ENCODE measurements at regions of chr6 and their contacts with region 1.

Region 1: DNA sequence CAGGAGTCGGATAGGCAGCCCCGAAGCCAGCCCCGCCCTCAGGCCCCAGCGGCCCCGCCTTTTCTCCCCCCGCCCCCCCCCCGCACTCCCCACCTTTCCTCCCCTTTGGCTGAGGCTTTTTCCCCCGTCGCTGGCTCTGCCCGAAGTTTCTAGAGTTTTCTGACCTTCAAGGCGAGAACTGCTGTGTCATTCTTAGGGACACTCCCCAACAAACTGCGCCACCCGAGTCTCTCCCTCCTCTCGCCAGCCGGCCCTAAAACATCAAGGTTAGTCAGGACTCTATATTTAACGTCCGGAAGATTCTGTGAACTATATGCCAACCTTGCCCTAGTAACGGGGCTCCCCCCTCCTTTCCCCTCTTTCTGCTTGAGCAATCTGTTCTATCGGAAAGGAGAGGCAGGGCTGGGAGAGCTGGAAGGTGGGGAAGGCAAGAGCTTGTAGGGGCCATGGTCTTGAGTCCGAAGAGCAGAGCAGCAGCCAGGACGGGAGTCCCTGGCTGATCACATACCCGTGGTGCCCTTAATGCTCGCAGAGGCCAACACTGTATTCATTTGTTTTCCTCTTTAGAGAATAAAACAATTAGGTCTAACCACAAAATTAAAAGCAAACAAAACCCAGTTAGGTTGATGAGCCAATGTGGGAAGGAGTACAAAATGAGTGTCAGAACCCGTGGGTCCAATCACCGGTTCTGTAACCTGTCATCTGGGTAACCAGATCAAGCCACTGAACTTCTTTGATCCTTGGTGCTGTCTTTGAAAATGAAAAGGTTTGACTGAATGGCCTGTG is 5.3 kb upstream of the HSPA1B start:
- DNase-seq: peak; percentile 95 to 100 (median 96)
- ATAC-seq: peak; percentile 77
- H3K4me3 ChIP-seq: peak overlapping the region; percentile 59
- H3K27ac ChIP-seq: peak overlapping the region; percentile 99
- H3K4me1 ChIP-seq: peaks cover 51 to 58% of the 10 kb centered on the region in 2 experiments
- H3K27me3 ChIP-seq: no peaks in the 10 kb centered on the region
- CTCF ChIP-seq: no peak; a peak in 1 of 6 replicates
- EP300 ChIP-seq: peak; percentile 77
- POLR2A ChIP-seq: peak; percentile 91
- RAD21 ChIP-seq: no peak; a peak in 1 of 4 replicates

Region 2: DNA sequence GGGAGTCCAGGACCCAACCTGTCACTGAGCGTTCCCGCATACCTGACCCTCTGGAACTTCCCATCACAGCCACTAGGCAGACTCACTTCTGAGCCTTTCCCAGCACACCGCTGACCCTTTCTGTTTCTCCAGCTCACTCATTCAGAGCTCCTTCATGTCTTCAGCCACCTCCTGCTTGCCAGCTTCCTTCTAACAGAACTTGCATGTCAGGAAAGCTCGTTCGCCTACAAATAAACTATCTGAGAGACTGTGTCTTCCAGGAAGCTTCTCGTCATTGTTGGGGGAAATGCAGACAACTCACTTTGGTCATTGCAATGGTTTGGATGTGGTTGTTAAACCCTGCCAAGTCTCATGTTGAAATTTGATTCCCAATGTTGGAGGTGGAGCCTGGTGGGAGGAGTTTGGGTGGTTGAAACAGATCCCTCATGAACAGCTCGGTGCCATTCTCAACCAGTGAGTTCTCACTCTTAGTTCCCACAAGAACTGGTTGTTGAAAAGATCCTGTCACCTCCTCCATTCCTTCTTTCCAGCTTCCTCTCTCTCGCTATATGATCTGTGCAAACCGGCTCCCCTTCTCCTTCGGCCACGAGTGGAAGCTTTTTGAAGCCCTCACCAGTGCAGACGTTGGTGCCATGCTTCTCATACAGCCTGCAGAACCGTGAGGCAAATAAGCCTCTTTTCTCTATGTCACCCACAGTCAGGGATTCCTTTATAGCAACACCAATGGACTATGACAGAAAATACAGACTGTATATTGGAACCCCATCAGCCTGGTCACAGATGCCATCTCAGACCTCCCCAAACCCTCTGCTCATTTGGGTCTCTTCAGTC is 840.1 kb before region 1 on chr6:
- CTCF ChIA-PET with region 1: no interaction called
- POLR2A ChIA-PET with region 1: no interaction called
- in situ Hi-C with region 1: no loop called
- intact Hi-C with region 1: no loop called
- DNase-seq: peak; percentile 25 to 46 (median 39)
- ATAC-seq: peak; percentile 88
- H3K4me3 ChIP-seq: no peak overlapping the region
- H3K27ac ChIP-seq: no peak overlapping the region
- H3K4me1 ChIP-seq: peaks cover 0 to 2% of the 10 kb centered on the region in 2 experiments; a peak in 1 of 5 replicates
- H3K27me3 ChIP-seq: peaks cover 31 to 50% of the 10 kb centered on the region in 2 experiments
- CTCF ChIP-seq: peak in 2 of 3 experiments; percentile 7 to 27; a peak in 1 of 6 replicates
- EP300 ChIP-seq: no peak
- POLR2A ChIP-seq: no peak
- RAD21 ChIP-seq: no peak

Region 3: GRCh38 chr6:31784098-31784925 is 37.9 kb before region 1 on chr6:
- CTCF ChIA-PET with region 1: no interaction called
- POLR2A ChIA-PET with region 1: interaction called, 13 read pairs
- in situ Hi-C with region 1: no loop called
- intact Hi-C with region 1: no loop called
- DNase-seq: no peak
- ATAC-seq: no peak
- H3K4me3 ChIP-seq: no peak overlapping the region
- H3K27ac ChIP-seq: no peak overlapping the region
- H3K4me1 ChIP-seq: peaks cover 0 to 30% of the 10 kb centered on the region in 2 experiments; a peak in 1 of 5 replicates
- H3K27me3 ChIP-seq: no peaks in the 10 kb centered on the region
- CTCF ChIP-seq: no peak
- EP300 ChIP-seq: no peak
- POLR2A ChIP-seq: no peak; the same call in 1 of the 2 replicates
- RAD21 ChIP-seq: no peak

Region 4: DNA sequence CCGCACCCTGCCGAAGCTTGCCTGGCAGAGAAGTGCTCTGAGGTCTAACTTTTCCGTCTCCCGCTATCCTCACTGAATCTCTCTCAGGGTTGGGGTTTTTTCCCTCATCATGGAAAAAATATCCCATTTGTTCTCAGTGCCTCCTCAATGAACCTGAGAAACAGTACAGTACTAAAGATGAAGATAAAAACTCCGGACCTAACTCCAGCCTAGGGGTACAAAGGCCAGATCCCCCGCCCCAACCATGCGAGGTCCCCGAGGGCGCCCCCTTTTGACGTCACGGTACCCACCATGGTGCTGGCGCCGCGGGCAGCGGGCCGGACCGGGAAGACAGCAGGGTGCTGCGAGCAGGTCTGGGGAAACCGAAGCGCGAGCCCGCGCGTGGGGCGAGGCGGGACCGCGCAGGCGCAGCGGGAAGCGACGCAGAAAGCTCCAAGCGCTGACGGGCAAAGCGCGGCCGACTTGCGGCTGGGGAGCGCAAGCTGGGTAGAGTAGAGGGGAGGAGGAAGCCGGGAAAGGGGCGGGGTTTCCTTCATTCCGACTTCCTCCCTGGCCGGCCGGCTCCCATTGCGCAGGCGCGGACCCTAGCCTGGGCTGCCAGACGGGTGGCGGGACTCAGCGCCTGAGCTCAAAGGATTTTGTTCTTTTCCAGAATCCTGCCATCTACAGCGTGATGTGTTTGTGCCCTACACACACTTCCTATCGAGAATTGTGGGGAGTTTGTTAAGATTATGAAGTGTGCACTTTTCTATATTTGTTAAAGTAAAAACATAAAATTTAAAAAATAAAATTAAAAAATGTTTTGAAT is 15.6 kb before region 1 on chr6 and contains the start of gene LSM2:
- CTCF ChIA-PET with region 1: no interaction called
- POLR2A ChIA-PET with region 1: interaction called, 93 read pairs
- in situ Hi-C with region 1: no loop called
- intact Hi-C with region 1: no loop called
- DNase-seq: peak; percentile 100
- ATAC-seq: peak; percentile 98
- H3K4me3 ChIP-seq: peak within 1 kb of the TSS; percentile 66
- H3K27ac ChIP-seq: peak within 1 kb of the TSS; percentile 86
- H3K4me1 ChIP-seq: peaks cover 14 to 30% of the 10 kb centered on the region in 2 experiments
- H3K27me3 ChIP-seq: no peaks in the 10 kb centered on the region
- CTCF ChIP-seq: peak; percentile 20 to 66 (median 36); a peak in 5 of 6 replicates
- EP300 ChIP-seq: peak; percentile 32; the same call in 1 of the 2 replicates
- POLR2A ChIP-seq: peak; percentile 97
- RAD21 ChIP-seq: peak; percentile 28 to 42; a peak in 3 of 4 replicates
- polyA plus RNA-seq, gene LSM2: 405 to 407 TPM

Measured in K562 (cell line).